CD4-positive, alpha-beta memory T cell (primary cell): ENCODE measurements at regions of chr20 and their contacts with region 1.

Region 1: DNA sequence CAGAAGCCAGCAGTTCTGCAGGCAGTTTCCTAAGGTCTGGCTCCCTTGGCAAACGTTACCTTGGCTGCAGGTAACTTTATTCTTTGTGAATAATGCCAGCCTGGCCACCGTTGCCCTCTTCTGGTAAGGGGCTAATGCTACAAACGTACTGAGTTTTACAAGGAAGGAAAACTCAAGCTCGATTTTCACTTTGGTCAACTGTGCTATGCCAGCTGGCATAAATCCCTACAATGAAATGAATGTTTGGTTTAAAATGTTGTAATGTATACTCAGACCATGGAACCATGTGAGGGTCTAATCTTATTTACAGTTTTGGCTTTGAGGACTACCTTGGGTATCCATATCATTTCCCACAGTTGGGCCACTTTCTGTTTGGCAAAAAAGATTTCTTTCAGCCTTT is 101.4 kb downstream of the SLX4IP start:
- DNase-seq: peak in 1 of 5 donors; percentile 10
- H3K4me3 ChIP-seq: no peak overlapping the region
- H3K4me3 Mint-ChIP-seq: no peak overlapping the region
- H3K27ac ChIP-seq: no peak overlapping the region
- H3K27ac Mint-ChIP-seq: no peak overlapping the region
- H3K4me1 ChIP-seq: peaks cover 18% of the 10 kb centered on the region
- H3K4me1 Mint-ChIP-seq: peaks cover 17 to 23% (median 19%) of the 10 kb centered on the region in 4 donors
- H3K27me3 ChIP-seq: no peaks in the 10 kb centered on the region
- H3K27me3 Mint-ChIP-seq: no peaks in the 10 kb centered on the region

Region 2: DNA sequence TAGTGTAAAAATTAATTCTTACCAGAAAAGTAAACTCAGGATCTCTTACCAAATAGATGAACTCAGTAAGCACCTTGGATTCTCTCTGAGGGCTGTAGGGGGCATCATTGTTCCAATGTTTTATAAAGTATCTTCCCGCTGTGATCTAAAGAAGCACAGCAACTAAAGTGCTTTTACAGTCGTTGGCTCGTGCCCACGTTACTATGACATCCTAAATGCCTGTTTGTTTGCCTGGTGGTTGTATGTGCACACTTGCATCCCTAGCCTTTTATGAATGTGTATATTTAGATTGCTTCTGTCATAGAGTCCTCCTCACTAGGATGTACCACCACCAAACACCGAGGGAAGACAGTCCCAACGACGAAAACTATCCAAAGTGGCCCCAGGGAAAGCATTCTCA is 66.9 kb before region 1 on chr20:
- CTCF ChIA-PET with region 1: interaction called, 4 read pairs
- POLR2A ChIA-PET with region 1: no interaction called
- intact Hi-C with region 1: loop called (anchors 1 kb)
- DNase-seq: peak in 2 of 5 donors; percentile 12 to 14
- H3K4me3 ChIP-seq: no peak overlapping the region
- H3K4me3 Mint-ChIP-seq: no peak overlapping the region
- H3K27ac ChIP-seq: no peak overlapping the region
- H3K27ac Mint-ChIP-seq: no peak overlapping the region
- H3K4me1 ChIP-seq: no peaks in the 10 kb centered on the region
- H3K4me1 Mint-ChIP-seq: peaks cover 5 to 15% (median 8%) of the 10 kb centered on the region in 4 donors
- H3K27me3 ChIP-seq: no peaks in the 10 kb centered on the region
- H3K27me3 Mint-ChIP-seq: no peaks in the 10 kb centered on the region

Region 3: GRCh38 chr20:10521068-10521831 is 15.3 kb before region 1 on chr20:
- CTCF ChIA-PET with region 1: interaction called, 11 read pairs
- POLR2A ChIA-PET with region 1: no interaction called
- intact Hi-C with region 1: no loop called
- DNase-seq: no peak
- H3K4me3 ChIP-seq: no peak overlapping the region
- H3K4me3 Mint-ChIP-seq: no peak overlapping the region
- H3K27ac ChIP-seq: no peak overlapping the region
- H3K27ac Mint-ChIP-seq: no peak overlapping the region
- H3K4me1 ChIP-seq: no peaks in the 10 kb centered on the region
- H3K4me1 Mint-ChIP-seq: peaks cover 18 to 24% (median 20%) of the 10 kb centered on the region in 4 donors
- H3K27me3 ChIP-seq: no peaks in the 10 kb centered on the region
- H3K27me3 Mint-ChIP-seq: no peaks in the 10 kb centered on the region